ENCODE measurements at regions of chr13 and their contacts with region 1.

Region 1: GRCh38 chr13:23007426-23007825 is 173.4 kb upstream of the SGCG start:
- DNase-seq: no peak
- CTCF ChIP-seq: no peak

Region 2: DNA sequence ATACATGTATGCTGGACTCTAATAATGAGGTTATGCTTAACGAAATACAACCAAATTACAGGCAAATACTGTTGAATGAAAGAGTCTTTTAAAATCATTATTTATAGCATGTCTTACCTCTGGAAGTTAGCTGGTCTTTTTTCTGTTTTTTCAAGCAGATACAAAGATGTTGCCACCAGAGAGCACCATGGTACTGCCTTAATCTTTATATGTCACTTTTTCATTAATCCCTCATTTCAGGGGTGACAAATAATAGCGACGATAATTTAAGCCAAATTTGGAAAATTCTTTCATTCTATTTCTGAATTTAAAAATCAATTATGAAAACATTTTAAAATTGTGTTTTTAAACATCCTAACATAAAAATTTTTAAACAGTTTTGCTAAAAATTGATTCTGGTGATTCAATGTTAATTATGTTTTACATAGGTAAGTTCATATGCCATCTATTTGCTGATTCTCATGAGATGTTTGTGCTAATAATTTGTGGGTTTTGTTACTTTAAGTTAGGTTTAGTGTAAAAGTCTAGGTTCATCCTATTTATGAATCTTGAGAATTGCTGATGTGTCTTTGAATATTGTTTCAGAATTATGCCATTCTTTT is 205.9 kb before region 1 on chr13:
- in situ Hi-C with region 1: loop called (anchors 5 kb)
- DNase-seq: peak; percentile 13
- CTCF ChIP-seq: peak; percentile 27

Region 3: DNA sequence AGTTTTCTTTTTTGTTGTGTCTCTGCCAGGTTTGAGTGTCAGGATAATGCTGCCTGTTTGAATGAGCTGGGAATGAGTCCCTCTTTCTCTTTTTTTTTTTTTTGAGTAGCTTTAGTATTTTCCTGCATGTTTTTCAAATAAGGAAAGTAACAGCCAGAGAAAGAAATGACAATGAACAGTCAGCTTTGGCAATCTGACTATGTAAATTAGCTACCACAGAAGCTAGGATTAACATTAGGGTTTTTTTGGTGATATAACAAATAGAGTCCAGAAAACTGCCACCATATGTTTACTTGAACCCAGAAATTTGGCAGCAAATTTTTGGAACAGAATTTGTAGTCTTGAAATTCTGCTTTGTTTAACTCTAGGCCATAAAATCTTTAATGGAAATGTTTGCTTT is 223.8 kb after region 1 on chr13:
- in situ Hi-C with region 1: no loop called
- DNase-seq: no peak
- CTCF ChIP-seq: no peak

Measured in GM13976 (cell line).